MCF 10A (cell line): ENCODE measurements at regions of chr4 and their contacts with region 1.

Region 1: GRCh38 chr4:39591290-39591689 is 47.4 kb downstream of the SMIM14 start:
- DNase-seq: peak; percentile 68
- H3K4me3 Mint-ChIP-seq: no peak overlapping the region
- H3K27ac Mint-ChIP-seq: no peak overlapping the region
- H3K4me1 Mint-ChIP-seq: no peaks in the 10 kb centered on the region
- H3K27me3 Mint-ChIP-seq: no peaks in the 10 kb centered on the region
- CTCF ChIP-seq: peak; percentile 43

Region 2: DNA sequence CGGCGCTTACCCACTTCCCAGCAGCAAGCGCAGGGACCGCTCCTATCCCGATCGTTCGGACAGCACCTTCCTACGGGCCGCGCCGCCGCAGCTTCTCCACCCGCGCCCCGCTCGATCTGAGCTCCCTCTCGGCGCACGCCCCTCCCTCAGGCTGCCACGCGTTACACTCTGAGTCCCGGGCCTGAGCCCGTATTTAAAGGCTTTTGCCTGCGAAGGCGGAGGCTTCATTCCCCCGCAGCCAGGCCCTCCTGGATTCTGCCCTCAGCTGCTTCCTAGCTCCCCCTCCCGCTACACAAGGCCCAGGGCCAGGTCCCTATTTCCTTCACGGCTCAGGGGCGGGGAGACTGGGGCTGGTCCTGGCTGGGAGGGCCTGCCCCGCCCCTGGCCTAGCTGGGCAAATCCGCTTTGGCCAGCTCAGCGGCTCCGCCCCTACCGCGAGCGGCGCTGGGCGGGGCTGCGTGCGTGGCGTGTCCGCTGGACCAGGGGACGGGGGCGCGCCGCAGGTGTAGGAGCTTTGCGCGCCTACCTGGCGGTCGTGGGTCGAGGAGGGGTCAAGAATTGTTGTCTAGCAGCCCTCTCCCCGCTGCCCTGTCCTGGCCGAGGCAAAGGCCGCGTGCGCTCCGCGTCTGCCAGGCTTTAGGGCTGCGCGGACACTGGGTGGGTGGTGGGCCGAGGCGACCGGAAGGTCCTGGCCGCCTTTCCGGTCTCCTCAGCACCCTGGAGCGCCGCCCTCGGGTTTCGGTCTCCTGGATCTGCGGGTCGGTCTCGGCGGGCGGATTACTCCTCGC is 63.8 kb before region 1 on chr4 and contains the start of gene UGDH:
- CTCF ChIA-PET with region 1: no interaction called
- POLR2A ChIA-PET with region 1: interaction called, 3 read pairs
- intact Hi-C with region 1: loop called (anchors 2 kb)
- DNase-seq: peak; percentile 98
- H3K4me3 Mint-ChIP-seq: peak within 1 kb of the TSS; percentile 98
- H3K27ac Mint-ChIP-seq: peak within 1 kb of the TSS; percentile 94
- H3K4me1 Mint-ChIP-seq: peaks cover 9% of the 10 kb centered on the region
- H3K27me3 Mint-ChIP-seq: no peaks in the 10 kb centered on the region
- CTCF ChIP-seq: no peak
- total RNA-seq, gene UGDH: 50.9 and 61.7 TPM in 2 replicates

Region 3: GRCh38 chr4:39754309-39754708 is 163.0 kb after region 1 on chr4:
- CTCF ChIA-PET with region 1: no interaction called
- POLR2A ChIA-PET with region 1: no interaction called
- intact Hi-C with region 1: no loop called
- DNase-seq: no peak
- H3K4me3 Mint-ChIP-seq: no peak overlapping the region
- H3K27ac Mint-ChIP-seq: no peak overlapping the region
- H3K4me1 Mint-ChIP-seq: peaks cover 6% of the 10 kb centered on the region
- H3K27me3 Mint-ChIP-seq: no peaks in the 10 kb centered on the region
- CTCF ChIP-seq: no peak